ENCODE measurements at regions of chr2 and their contacts with region 1.

Region 1: GRCh38 chr2:71100195-71100964 is 29.6 kb downstream of the MCEE start:
- DNase-seq: peak; percentile 69
- H3K4me3 Mint-ChIP-seq: no peak overlapping the region
- H3K27ac Mint-ChIP-seq: no peak overlapping the region
- H3K4me1 Mint-ChIP-seq: no peaks in the 10 kb centered on the region
- H3K27me3 Mint-ChIP-seq: no peaks in the 10 kb centered on the region

Region 2: DNA sequence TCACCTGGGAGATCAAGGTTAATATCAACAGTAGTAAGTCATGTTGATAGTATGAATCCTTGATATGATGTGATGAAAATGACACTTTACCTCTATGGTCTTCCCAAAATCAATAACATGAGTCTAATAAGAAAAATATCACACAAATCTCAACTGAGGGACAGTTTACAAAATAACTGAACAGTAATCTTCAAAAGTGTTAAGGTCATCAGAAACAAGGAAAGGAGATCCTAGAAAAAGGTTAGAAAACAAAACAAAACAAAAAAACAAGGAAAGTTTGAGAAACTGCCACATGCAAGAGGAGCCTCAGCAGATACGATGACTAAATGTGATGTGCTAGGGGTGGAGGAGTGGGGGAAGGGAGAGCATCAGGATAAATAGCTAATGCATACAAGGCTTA is 13.5 kb after region 1 on chr2:
- CTCF ChIA-PET with region 1: interaction called, 12 read pairs
- POLR2A ChIA-PET with region 1: no interaction called
- intact Hi-C with region 1: no loop called
- DNase-seq: no peak
- H3K4me3 Mint-ChIP-seq: no peak overlapping the region
- H3K27ac Mint-ChIP-seq: no peak overlapping the region
- H3K4me1 Mint-ChIP-seq: peaks cover 13% of the 10 kb centered on the region
- H3K27me3 Mint-ChIP-seq: no peaks in the 10 kb centered on the region

Region 3: GRCh38 chr2:71130113-71130904 is 29.9 kb after region 1 on chr2 and contains the starts of genes MCEE and MPHOSPH10:
- CTCF ChIA-PET with region 1: interaction called, 28 read pairs
- POLR2A ChIA-PET with region 1: interaction called, 3 read pairs
- intact Hi-C with region 1: loop called (anchors 1 kb)
- DNase-seq: peak; percentile 94
- H3K4me3 Mint-ChIP-seq: no peak within 1 kb of the TSS
- H3K27ac Mint-ChIP-seq: no peak within 1 kb of the TSS
- H3K4me1 Mint-ChIP-seq: peaks cover 11% of the 10 kb centered on the region
- H3K27me3 Mint-ChIP-seq: no peaks in the 10 kb centered on the region
- total RNA-seq, gene MCEE: 12.0 to 16.1 TPM
- total RNA-seq, gene MPHOSPH10: 37.1 to 38.5 TPM

Measured in activated CD4-positive, alpha-beta memory T cell treated with anti-CD3 and anti-CD28 coated beads for 36 hours (primary cell).